ENCODE measurements at regions of chr5 and their contacts with region 1.

Region 1: DNA sequence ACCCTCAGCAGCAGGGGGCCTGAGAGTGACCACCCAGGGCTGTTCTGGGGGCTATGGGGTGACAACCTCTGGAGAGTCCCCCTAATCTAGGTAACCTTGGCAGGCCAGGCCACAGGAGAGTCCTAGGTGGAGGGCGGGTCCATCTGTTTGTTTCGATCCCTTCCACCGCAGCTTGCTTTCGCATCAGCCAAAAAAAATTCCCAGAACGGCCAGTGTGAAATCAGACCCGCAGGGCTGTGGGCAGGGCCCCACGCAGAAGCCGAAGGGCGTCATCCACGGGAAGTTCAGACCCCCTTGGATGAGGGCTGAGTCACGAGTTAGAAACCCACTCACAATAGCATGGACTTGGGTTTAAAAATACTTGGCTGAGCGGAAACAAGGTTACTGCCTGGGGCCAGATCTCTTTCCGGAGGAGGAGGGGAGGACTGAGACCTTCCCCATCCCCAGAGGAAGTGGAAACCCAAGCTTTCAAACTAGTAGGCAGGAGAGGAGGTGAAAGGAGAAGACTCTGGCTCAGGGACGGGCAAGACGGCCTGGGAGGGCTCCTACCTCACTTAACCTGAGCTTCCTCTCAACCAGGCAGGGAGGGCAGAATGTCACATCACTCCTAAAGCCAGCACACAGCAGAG is 8.5 kb downstream of the STK10 start:
- DNase-seq: peak; percentile 71
- ATAC-seq: peak; percentile 16
- H3K4me3 ChIP-seq: peak overlapping the region; percentile 17 to 68 (median 52)
- H3K4me3 Mint-ChIP-seq: peak overlapping the region; percentile 88
- H3K27ac ChIP-seq: peak overlapping the region; percentile 96 to 98
- H3K27ac Mint-ChIP-seq: peak overlapping the region; percentile 96
- H3K4me1 ChIP-seq: peaks cover 74 to 99% of the 10 kb centered on the region in 2 donors
- H3K4me1 Mint-ChIP-seq: peaks cover 85% of the 10 kb centered on the region
- H3K27me3 ChIP-seq: no peaks in the 10 kb centered on the region
- H3K27me3 Mint-ChIP-seq: no peaks in the 10 kb centered on the region
- CTCF ChIP-seq: no peak

Region 2: GRCh38 chr5:172078726-172079345 is 100.6 kb before region 1 on chr5:
- CTCF ChIA-PET with region 1: no interaction called
- POLR2A ChIA-PET with region 1: interaction called, 11 read pairs
- intact Hi-C with region 1: no loop called
- DNase-seq: no peak
- ATAC-seq: no peak
- H3K4me3 ChIP-seq: no peak overlapping the region
- H3K4me3 Mint-ChIP-seq: no peak overlapping the region
- H3K27ac ChIP-seq: no peak overlapping the region
- H3K27ac Mint-ChIP-seq: peak overlapping the region; percentile 23
- H3K4me1 ChIP-seq: no peaks in the 10 kb centered on the region
- H3K4me1 Mint-ChIP-seq: no peaks in the 10 kb centered on the region
- H3K27me3 ChIP-seq: no peaks in the 10 kb centered on the region
- H3K27me3 Mint-ChIP-seq: no peaks in the 10 kb centered on the region
- CTCF ChIP-seq: no peak

Region 3: DNA sequence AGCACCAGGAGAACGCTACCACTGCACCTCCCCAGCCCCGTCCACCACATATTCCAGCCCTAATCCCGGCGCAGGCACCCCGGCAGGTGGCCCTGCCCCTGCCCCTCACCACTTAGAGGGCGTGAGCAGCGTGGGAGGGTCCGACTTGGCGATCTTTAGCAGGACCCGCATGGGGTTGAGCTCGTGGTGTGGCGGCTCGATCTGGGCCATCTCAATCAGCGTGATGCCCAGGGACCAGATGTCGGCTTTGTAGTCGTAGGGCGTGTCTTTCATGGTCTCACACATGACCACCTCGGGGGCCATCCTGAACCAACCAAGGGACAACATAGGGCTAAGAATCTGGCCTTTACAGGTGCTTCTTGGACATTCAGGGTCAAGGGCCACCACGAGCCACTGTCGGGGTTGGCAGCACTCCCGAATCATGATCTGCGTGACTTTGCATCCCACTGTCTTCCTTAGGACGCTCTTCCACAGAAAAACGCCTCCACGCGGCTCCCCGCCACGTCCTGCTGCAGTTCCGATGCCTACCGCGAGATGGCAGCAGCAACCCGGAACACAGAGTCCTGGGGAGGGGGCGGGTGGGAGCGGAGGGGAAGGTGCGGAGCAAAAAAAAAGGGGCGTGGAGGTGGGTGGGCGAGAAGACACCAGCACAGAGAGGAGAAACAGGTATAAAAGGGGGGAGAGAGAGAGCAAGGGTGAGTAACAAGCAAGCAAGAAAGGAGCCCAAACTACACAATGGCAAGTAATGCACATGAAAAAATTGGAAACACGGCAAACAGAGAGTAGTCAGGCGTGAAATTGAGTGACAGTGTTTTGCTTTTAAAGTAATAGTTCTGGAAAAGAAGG is 72.7 kb before region 1 on chr5:
- CTCF ChIA-PET with region 1: interaction called, 245 read pairs
- POLR2A ChIA-PET with region 1: interaction called, 12 read pairs
- intact Hi-C with region 1: loop called (anchors 1 kb)
- DNase-seq: peak; percentile 76
- ATAC-seq: no peak
- H3K4me3 ChIP-seq: no peak overlapping the region
- H3K4me3 Mint-ChIP-seq: no peak overlapping the region
- H3K27ac ChIP-seq: peak overlapping the region in 1 of 2 donors; percentile 41
- H3K27ac Mint-ChIP-seq: peak overlapping the region; percentile 70
- H3K4me1 ChIP-seq: peaks cover 31 to 40% of the 10 kb centered on the region in 2 donors
- H3K4me1 Mint-ChIP-seq: peaks cover 35% of the 10 kb centered on the region
- H3K27me3 ChIP-seq: no peaks in the 10 kb centered on the region
- H3K27me3 Mint-ChIP-seq: no peaks in the 10 kb centered on the region
- CTCF ChIP-seq: peak; percentile 92

Region 4: DNA sequence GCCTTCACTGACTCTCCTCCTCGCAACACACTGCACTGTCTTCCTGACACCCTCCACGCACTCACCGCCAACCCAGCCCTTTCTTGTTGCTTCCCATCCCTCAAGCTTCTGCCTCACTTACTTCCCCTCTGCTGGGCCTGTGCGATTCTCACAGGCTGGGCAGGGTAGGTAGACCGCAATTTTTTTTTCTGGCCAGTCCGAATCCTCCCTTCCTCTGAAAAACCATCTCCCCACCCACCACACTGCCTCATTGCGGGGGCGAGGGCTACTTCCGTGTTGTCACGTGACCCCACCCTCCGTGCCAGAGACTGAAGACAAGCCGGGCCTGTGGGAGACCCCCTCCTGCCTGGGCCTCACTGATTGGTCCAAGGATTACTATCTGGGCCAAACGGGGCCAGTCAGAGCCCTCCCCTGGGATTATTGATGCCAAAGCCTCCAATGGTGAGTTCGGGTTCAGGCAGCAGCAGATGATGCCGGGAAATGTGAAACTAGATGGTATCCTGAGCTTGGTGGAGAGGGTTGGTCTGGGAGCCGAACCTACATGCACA is 64.5 kb before region 1 on chr5:
- CTCF ChIA-PET with region 1: interaction called, 245 read pairs
- POLR2A ChIA-PET with region 1: interaction called, 12 read pairs
- intact Hi-C with region 1: loop called (anchors 1 kb)
- DNase-seq: peak; percentile 88
- ATAC-seq: peak; percentile 31
- H3K4me3 ChIP-seq: peak overlapping the region in 4 of 5 experiments; percentile 9 to 38 (median 22)
- H3K4me3 Mint-ChIP-seq: peak overlapping the region; percentile 81
- H3K27ac ChIP-seq: peak overlapping the region; percentile 86 to 89
- H3K27ac Mint-ChIP-seq: peak overlapping the region; percentile 94
- H3K4me1 ChIP-seq: peaks cover 49 to 58% of the 10 kb centered on the region in 2 donors
- H3K4me1 Mint-ChIP-seq: peaks cover 61% of the 10 kb centered on the region
- H3K27me3 ChIP-seq: no peaks in the 10 kb centered on the region
- H3K27me3 Mint-ChIP-seq: no peaks in the 10 kb centered on the region
- CTCF ChIP-seq: no peak

Region 5: DNA sequence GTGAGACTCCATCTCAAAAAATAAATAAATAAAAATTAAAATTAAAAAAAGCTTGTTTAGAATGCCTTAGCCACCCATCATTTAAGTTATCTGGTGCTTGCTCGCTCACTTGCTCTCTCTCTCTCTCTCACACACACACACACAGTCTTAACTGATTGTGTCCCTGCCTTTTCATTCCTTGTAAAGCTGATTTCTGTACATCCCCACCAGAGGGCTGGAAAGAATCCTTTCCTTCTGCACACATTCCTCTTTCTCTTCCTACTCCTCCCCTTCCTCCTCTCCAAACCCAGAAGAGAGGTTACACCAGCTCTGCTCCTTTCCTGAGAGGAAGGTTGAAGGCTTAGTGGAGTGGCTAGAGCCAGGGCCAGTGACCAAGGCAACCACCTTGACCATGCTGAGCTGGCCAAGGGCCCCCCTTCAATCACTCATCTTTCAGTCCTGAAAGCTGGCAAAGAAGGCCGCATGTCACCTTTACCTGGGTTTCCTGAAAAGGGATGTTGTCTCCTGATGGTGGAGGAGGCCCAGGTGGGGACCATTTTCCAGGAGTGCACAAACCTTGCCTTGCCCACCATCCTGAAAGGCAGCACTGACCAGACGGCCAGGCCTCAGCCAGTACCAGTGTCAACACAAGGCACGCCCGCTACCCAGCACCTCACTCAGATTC is 17.0 kb before region 1 on chr5:
- CTCF ChIA-PET with region 1: interaction called, 155 read pairs
- POLR2A ChIA-PET with region 1: interaction called, 3 read pairs
- intact Hi-C with region 1: no loop called
- DNase-seq: no peak
- ATAC-seq: no peak
- H3K4me3 ChIP-seq: no peak overlapping the region
- H3K4me3 Mint-ChIP-seq: no peak overlapping the region
- H3K27ac ChIP-seq: peak overlapping the region in 1 of 2 donors; percentile 40
- H3K27ac Mint-ChIP-seq: peak overlapping the region; percentile 50
- H3K4me1 ChIP-seq: peaks cover 42 to 60% of the 10 kb centered on the region in 2 donors
- H3K4me1 Mint-ChIP-seq: peaks cover 68% of the 10 kb centered on the region
- H3K27me3 ChIP-seq: no peaks in the 10 kb centered on the region
- H3K27me3 Mint-ChIP-seq: no peaks in the 10 kb centered on the region
- CTCF ChIP-seq: no peak